Vagina (tissue), 2 donors: ENCODE measurements at regions of chr13 and their contacts with region 1.

Region 1: GRCh38 chr13:97975848-97976609 is 22.6 kb downstream of the IPO5 start:
- DNase-seq: no peak
- H3K4me3 ChIP-seq: peak overlapping the region; percentile 83 to 93
- H3K27ac ChIP-seq: peak overlapping the region; percentile 92
- H3K4me1 ChIP-seq: peaks cover 30% of the 10 kb centered on the region
- H3K27me3 ChIP-seq: no peaks in the 10 kb centered on the region
- CTCF ChIP-seq: no peak
- POLR2A ChIP-seq: peak in 1 of 2 donors; percentile 84

Region 2: DNA sequence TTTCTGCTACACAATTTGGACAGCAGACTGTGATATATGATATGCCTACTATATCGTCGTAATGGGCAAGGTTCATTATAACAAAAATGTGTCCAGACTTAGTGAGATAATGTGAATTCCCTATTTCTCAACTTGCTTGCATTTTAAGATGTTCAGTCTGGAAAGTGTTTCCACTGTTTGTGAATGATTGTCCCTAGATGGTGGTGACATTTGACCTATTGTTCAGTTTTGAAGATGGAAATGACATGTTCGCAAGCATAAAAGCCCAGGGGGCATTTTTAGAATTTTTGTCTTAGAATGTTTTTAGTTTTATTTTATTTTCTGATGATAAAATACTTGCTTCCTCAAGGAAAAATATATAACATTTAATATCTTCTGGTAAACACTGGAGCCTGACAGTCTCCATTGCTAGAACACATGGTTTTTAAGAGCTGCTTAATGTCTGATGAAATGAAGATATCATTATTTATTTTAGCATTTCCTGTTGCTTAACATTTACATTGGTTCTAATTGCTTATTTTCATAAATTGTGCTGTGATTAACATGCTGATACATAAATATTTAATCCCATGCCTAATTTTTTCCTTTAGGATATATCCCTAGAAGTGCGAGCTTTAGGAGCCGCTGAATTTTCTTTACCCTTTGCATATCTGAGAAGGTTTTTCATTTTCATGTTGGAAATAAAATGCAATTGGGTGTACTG is 726.8 kb before region 1 on chr13:
- intact Hi-C with region 1: loop called (anchors 5 kb)
- DNase-seq: no peak
- H3K4me3 ChIP-seq: no peak overlapping the region
- H3K27ac ChIP-seq: peak overlapping the region; percentile 31
- H3K4me1 ChIP-seq: peaks cover 57% of the 10 kb centered on the region
- H3K27me3 ChIP-seq: no peaks in the 10 kb centered on the region
- CTCF ChIP-seq: no peak
- POLR2A ChIP-seq: no peak

Region 3: DNA sequence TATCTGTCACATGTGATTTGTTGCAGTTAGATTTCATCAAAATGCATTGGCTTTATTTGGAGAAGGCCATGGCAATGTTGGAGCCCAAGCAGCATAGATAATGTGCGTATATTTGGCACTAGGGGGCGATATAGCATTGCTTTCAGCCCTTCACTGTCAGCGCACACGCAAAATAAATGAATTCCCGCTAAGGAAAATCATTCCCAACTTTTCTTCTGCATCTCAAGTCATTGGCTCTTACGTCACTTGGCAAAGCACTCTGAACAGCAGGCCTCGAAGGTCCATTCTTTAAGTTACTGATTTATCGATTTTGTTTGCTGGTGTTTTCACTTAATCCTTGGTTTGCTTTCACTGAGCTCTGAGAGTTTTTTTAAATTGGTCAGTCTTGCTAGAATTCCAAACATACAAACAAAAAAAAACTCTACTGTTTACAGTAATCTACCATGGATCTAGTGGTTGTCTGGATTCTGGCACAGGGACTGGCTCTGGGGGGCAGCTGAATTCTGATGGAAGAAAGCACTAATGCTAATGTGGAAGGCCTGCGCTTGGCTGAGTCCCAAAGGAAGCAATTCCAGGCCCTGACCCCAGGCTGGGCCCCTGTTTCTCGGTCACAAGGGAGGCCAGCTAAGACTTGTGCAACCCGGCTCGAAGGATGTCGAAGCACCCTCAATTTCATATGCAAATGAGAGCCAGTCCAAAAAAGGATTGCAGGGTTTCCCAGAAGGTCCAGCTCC is 120.3 kb before region 1 on chr13:
- intact Hi-C with region 1: loop called (anchors 5 kb)
- DNase-seq: no peak
- H3K4me3 ChIP-seq: no peak overlapping the region
- H3K27ac ChIP-seq: peak overlapping the region; percentile 29
- H3K4me1 ChIP-seq: peaks cover 7% of the 10 kb centered on the region
- H3K27me3 ChIP-seq: no peaks in the 10 kb centered on the region
- CTCF ChIP-seq: peak; percentile 43 to 61 (median 57)
- POLR2A ChIP-seq: no peak

Region 4: DNA sequence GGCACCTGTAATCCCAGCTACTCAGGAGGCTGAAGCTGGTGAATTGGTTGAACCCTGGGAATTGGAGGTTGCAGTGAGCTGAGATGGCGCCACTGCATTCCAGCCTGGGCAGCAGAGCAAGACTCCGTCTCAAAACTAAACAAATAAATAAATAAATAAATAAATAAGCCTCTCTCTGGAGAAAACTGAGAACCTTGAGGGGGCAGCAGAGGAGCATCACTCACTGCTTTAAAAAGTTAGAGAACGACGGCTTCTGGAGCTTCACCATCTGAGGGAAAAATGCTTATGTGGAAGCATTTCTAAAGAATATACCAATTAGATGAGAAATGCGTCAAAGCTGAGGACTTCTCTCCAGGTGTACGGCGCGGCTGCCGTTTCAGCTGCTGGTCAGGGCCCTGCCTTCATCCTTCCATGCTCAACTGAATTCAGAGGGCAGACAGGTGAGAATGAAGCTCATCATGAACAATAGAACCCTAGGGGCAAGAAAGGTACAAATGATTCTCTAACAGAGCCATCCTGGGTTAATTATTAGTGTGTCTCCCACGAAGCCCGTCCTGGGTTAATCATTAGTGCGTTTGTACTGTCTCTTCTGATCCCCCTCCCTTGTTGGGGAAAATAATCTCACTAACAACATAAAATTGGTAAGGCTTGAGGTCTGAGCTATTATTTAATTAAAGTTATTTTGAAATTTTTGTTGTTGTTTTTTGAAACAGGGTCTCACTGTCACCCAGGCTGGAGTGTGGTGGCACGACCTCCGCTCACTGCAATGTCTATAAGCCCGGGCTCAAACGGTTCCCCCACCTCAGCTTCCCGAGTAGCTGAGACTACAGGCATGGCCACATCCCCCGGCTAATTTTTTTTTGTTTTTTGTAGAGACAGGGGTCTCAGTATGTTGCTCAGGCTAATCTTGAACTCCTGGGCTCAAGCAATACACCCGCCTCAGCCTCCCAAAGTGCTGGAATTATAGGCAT is 57.5 kb after region 1 on chr13:
- intact Hi-C with region 1: no loop called
- DNase-seq: no peak
- H3K4me3 ChIP-seq: no peak overlapping the region
- H3K27ac ChIP-seq: no peak overlapping the region
- H3K4me1 ChIP-seq: no peaks in the 10 kb centered on the region
- H3K27me3 ChIP-seq: no peaks in the 10 kb centered on the region
- CTCF ChIP-seq: no peak
- POLR2A ChIP-seq: no peak